ENCODE measurements at regions of chr16 and their contacts with region 1.

Region 1: GRCh38 chr16:8173111-8173644 is 417.1 kb downstream of the TMEM114 start:
- DNase-seq: peak; percentile 53 to 74 (median 73)
- ATAC-seq: peak in 3 of 4 donors; percentile 62 to 74 (median 70)
- H3K4me3 ChIP-seq: no peak overlapping the region
- H3K27ac ChIP-seq: no peak overlapping the region
- H3K4me1 ChIP-seq: no peaks in the 10 kb centered on the region
- H3K27me3 ChIP-seq: peaks cover 0 to 7% (median 0%) of the 10 kb centered on the region in 9 donors
- CTCF ChIP-seq: peak; percentile 66 to 83 (median 74)
- POLR2A ChIP-seq: no peak

Region 2: DNA sequence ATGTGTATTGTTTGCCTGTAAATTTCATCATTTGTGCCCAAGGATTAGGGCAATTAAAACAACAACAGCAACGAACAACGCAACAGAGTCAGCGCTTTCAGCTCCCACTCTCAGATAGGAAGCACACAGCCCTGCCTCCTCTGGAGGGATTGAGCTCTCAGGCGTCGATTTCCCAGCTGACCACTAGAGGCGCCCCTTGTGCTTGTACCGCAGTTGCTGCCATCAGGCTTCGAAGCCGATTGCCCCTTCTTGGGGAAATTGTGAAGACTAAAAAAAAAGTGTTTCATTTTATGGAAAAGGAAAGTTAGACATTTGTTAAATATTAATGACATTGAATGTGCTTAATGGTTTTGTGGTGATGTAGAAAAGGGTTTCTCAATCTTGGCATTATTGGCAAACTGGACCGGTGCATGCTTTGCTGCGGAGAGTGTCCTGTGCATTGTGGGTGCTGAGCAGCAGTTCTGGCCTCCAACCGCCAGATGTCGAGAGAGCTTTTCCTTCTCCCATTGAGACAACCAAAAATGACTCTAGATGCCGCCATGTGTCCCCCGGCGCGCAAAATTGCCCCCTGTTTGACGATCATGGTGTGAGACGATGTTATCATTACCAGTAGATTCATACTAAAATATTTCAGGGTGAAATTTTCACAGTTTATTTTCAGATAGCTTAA is 1490.9 kb before region 1 on chr16:
- intact Hi-C with region 1: loop called in 2 of 10 experiments (anchors 10 kb)
- DNase-seq: peak in 1 of 5 donors; percentile 24
- ATAC-seq: no peak
- H3K4me3 ChIP-seq: no peak overlapping the region
- H3K27ac ChIP-seq: no peak overlapping the region
- H3K4me1 ChIP-seq: no peaks in the 10 kb centered on the region
- H3K27me3 ChIP-seq: peaks cover 0 to 15% (median 0%) of the 10 kb centered on the region in 9 donors
- CTCF ChIP-seq: peak; percentile 22 to 56 (median 41)
- POLR2A ChIP-seq: no peak

Region 3: DNA sequence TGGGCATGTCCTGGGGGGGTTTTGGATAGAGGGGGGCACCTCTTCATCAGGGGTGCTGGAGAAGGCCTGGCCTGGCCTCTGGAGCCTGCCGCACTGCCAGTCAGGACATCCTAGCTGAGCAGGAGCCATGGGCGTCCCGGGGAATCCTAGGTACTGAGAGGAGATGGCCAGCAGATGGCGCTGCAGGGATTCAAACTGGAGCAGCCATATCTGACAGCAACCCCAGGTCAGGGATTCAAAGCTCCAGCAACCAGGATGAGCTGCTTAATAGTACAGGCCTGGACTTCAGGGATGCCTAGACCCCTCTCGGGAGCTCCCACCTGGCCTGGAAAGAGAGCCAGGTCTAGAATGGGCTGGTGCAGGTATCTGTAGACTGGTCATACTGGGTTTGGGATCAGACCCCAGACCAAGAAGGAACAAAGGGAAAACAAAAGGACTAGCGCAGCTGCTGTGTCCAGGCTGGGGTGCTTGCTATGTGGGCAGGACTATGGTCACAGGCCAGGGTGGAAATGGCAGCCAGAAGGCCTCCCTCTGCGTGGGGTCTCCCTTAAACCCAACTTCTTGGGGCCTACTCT is 1147.5 kb before region 1 on chr16:
- intact Hi-C with region 1: loop called in 6 of 10 experiments (anchors 2 to 10 kb)
- DNase-seq: peak; percentile 31 to 81 (median 65)
- ATAC-seq: peak in 3 of 4 donors; percentile 72 to 79 (median 72)
- H3K4me3 ChIP-seq: no peak overlapping the region
- H3K27ac ChIP-seq: no peak overlapping the region
- H3K4me1 ChIP-seq: no peaks in the 10 kb centered on the region
- H3K27me3 ChIP-seq: peaks cover 0 to 5% (median 0%) of the 10 kb centered on the region in 9 donors
- CTCF ChIP-seq: peak; percentile 44 to 74 (median 56)
- POLR2A ChIP-seq: no peak

Region 4: DNA sequence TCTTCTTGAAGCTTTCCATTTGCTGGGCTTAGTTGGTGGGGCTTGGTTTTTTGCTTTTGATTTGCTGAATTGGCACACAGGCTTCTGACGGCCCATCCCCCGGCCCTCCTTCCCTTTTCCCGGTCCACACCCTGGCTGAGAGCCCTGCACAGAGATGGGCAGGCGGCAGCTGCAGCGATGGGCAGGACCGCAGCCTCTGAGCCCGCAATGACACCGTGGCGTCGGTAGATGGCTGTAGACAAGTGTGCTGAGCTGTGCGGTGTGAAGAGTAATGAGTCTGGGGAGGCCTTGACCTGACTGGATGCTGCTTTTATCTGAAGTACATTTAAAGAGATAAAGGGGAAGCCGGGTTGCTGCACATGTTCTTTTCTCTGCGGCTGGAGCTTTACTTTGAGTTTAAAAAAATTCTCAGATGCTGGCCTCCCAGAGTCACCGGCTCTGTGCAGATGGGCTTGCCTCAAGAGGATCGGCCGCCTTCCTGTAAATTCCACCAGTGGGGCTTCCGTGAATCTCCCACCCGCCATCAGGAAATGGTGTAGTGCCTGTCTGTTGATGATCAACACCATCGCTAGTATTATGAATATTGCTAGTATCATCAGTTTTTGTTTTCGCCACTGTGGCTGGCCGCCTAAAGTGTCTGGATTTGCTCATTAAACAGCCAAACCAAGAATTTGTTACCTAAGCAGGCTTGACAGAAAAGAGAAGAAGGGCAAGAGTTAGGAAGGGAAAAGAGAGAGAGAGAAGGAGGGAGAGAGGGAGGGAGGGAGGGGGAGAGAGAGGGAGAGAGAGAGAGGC is 1086.2 kb before region 1 on chr16:
- intact Hi-C with region 1: loop called in 2 of 10 experiments (anchors 10 kb)
- DNase-seq: peak; percentile 8 to 63 (median 48)
- ATAC-seq: peak in 3 of 4 donors; percentile 65 to 94 (median 83)
- H3K4me3 ChIP-seq: peak overlapping the region in 2 of 12 donors; percentile 6 to 11
- H3K27ac ChIP-seq: no peak overlapping the region
- H3K4me1 ChIP-seq: no peaks in the 10 kb centered on the region
- H3K27me3 ChIP-seq: peaks cover 0 to 66% (median 0%) of the 10 kb centered on the region in 9 donors
- CTCF ChIP-seq: peak in 11 of 12 donors; percentile 11 to 41 (median 27)
- POLR2A ChIP-seq: no peak

Region 5: GRCh38 chr16:7268182-7268581 is 905.0 kb before region 1 on chr16:
- intact Hi-C with region 1: loop called in 4 of 10 experiments (anchors 5 to 10 kb)
- DNase-seq: peak in 1 of 5 donors; percentile 19
- ATAC-seq: peak; percentile 34 to 70 (median 42)
- H3K4me3 ChIP-seq: no peak overlapping the region
- H3K27ac ChIP-seq: no peak overlapping the region
- H3K4me1 ChIP-seq: no peaks in the 10 kb centered on the region
- H3K27me3 ChIP-seq: no peaks in the 10 kb centered on the region
- CTCF ChIP-seq: peak; percentile 51 to 73 (median 60)
- POLR2A ChIP-seq: no peak

Region 6: DNA sequence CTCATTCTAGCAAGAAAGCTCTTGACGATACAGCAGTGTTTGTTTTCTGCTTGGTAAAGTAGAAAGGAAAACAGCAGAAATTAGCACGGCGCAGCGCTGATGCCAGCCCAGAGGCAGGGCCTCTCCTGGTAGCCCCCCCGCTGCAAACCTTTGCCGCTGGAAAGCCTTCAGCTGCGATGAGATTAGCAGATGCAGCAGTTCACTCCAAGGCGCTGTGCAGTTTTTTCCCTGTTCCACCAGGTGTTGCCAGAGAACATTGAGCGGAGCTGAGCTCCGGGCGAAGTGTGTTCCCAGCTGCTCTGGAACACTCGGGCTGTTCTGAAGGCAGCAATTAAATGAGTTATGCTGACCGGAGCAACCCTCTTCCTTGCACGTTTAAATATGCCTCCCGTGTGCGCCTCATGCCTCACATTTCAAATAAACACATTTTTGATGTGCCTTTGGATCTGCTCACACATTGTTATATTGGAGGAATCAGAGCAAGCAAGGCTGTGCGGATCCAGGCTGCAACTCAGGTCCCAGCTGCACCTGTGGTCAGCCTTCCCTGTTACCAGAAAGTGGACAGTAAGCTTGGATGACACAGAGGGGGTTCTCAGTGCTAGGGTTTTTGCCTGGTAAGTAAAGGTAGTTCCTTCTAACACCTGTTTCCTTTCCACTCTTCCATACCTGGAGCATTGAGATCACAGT is 767.9 kb before region 1 on chr16:
- intact Hi-C with region 1: loop called in 1 of 10 experiments (anchors 5 kb)
- DNase-seq: peak; percentile 47 to 81 (median 66)
- ATAC-seq: peak; percentile 92 to 95 (median 94)
- H3K4me3 ChIP-seq: peak overlapping the region in 3 of 12 donors; percentile 11 to 27 (median 26)
- H3K27ac ChIP-seq: peak overlapping the region in 3 of 12 donors; percentile 8 to 56 (median 39)
- H3K4me1 ChIP-seq: peaks cover 0 to 21% (median 0%) of the 10 kb centered on the region in 12 donors
- H3K27me3 ChIP-seq: no peaks in the 10 kb centered on the region
- CTCF ChIP-seq: peak in 11 of 12 donors; percentile 21 to 62 (median 46)
- POLR2A ChIP-seq: no peak

Region 7: DNA sequence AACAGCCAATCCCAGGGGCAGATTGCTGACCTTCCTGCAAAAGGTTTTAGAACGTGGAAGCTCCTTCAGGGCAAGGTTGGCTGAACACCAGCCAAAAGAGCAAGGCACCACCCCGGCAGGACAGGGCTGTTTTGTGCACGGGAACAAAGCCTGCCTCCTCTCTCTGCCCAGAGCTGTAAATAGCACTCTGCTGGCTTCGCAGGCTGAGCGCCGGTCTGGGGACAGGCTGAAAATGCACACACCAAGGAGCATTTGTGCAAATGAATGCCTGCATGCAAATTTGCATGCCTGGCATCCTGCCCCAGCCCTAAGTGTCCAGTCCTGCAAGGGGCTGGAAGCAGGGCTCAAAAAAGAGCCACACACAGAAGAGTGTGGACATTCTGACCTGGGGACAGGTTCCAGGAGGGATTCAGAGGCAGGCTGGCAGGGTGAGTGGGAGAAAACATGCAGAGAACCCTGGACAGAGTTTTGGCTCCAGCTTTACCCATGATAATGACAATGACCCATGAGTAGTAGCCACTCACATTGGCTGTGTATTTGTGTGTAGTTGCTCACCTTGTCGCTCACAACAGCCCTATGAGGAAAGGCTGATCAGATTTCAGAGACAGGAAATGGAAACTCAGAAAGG is 512.9 kb after region 1 on chr16:
- intact Hi-C with region 1: no loop called
- DNase-seq: peak; percentile 32 to 78 (median 62)
- ATAC-seq: peak; percentile 92 to 97 (median 94)
- H3K4me3 ChIP-seq: no peak overlapping the region
- H3K27ac ChIP-seq: peak overlapping the region in 7 of 12 donors; percentile 22 to 69 (median 48)
- H3K4me1 ChIP-seq: peaks cover 0 to 13% (median 0%) of the 10 kb centered on the region in 12 donors
- H3K27me3 ChIP-seq: no peaks in the 10 kb centered on the region
- CTCF ChIP-seq: no peak
- POLR2A ChIP-seq: no peak

Measured in heart left ventricle (tissue), 16 donors.